Activated naive CD4-positive, alpha-beta T cell treated with anti-CD3 and anti-CD28 coated beads for 36 hours (primary cell): ENCODE measurements at regions of chr6 and their contacts with region 1.

Region 1: DNA sequence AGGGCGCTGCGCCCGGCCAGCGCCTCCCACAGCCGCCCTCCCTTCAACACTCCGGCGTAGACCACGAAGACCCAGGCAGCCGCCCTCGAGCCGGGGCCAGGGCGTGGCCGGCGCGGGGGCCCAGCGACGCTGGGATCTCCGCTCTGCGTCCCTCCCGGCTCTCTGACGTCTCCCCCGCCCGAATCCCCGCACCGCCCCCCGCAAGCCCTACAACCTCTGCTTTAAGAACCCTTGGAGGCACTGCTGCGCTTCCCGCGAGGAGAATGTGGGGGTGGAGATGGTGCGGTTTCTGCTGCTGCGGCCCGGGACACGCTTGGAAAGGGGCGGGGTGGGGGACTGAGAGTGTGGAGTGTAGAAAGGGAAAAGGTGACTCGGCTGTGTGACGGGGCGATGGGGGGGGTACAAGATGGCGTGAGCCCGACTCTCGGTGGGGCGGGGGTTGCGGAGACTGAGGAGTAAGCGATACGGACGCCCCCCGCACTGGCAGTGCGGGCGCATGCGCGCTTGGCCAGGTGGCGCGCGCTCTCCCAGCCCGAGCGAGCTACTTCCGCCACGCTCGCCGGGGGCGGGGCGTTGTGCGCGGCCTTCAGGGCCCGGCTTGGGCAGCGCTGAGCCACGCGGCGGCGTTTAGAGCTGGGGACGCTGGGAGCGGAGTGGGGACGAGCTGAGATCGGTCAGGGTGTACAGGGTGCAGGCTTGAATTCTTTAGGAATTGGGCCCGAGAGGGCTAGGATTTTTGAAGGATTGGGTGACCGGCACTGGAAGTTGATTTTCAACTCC is at the start of gene SUPT3H:
- DNase-seq: peak; percentile 91
- H3K4me3 Mint-ChIP-seq: peak within 1 kb of the TSS; percentile 92
- H3K27ac Mint-ChIP-seq: peak within 1 kb of the TSS; percentile 99
- H3K4me1 Mint-ChIP-seq: peaks cover 16% of the 10 kb centered on the region
- H3K27me3 Mint-ChIP-seq: no peaks in the 10 kb centered on the region
- total RNA-seq, gene SUPT3H: 15.7 to 17.9 TPM

Region 2: DNA sequence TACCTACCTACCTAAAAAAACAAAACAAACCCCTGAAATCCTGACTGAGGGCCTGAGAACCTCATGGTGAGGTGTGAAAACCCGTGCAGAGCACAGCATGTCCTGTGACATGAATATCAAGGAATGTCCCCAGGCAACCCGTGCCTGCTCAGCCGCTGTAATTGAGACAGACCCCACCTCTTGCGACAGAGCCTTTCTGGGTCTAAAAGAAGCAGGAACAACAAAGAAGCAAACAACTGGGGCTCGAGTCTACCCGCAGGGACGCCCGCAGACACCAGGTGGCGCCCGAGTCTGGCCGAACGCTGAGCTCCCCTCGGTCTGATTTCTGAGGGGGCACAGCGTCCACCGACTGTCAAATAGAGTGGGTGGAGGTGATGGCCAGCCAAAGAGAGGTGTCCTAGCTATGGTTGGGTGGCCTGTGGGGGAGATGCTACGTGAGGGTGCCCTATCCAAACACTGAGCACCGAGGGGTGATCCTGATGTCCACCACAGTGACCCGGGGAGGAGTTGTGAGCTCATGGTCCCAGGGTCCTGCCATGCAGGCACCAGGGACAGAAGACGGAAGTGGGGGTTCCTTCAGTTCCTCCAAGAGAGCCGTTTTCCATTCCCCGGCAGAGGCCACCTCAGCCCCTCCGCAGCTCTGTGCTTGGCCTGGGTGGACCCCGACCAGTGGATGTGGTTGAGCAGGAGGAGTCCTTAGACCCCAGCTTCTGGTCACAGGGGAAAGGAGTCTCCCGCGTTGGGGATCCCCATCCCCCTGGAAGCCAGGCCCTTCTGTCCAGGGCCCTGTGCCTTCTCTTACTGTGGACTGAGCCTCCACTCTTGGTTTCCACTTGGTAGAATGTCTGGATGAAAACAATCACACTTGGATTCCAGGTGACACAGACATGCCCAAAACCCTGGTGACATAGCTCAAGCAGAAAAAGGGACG is 722.1 kb before region 1 on chr6:
- CTCF ChIA-PET with region 1: no interaction called
- intact Hi-C with region 1: loop called (anchors 1 kb)
- DNase-seq: peak; percentile 81
- H3K4me3 Mint-ChIP-seq: peak overlapping the region; percentile 38
- H3K27ac Mint-ChIP-seq: peak overlapping the region; percentile 62
- H3K4me1 Mint-ChIP-seq: peaks cover 10% of the 10 kb centered on the region
- H3K27me3 Mint-ChIP-seq: no peaks in the 10 kb centered on the region

Region 3: GRCh38 chr6:44932651-44933091 is 445.1 kb before region 1 on chr6:
- CTCF ChIA-PET with region 1: no interaction called
- intact Hi-C with region 1: loop called (anchors 2 kb)
- DNase-seq: peak; percentile 51
- H3K4me3 Mint-ChIP-seq: peak overlapping the region; percentile 78
- H3K27ac Mint-ChIP-seq: peak overlapping the region; percentile 91
- H3K4me1 Mint-ChIP-seq: peaks cover 49% of the 10 kb centered on the region
- H3K27me3 Mint-ChIP-seq: no peaks in the 10 kb centered on the region

Region 4: DNA sequence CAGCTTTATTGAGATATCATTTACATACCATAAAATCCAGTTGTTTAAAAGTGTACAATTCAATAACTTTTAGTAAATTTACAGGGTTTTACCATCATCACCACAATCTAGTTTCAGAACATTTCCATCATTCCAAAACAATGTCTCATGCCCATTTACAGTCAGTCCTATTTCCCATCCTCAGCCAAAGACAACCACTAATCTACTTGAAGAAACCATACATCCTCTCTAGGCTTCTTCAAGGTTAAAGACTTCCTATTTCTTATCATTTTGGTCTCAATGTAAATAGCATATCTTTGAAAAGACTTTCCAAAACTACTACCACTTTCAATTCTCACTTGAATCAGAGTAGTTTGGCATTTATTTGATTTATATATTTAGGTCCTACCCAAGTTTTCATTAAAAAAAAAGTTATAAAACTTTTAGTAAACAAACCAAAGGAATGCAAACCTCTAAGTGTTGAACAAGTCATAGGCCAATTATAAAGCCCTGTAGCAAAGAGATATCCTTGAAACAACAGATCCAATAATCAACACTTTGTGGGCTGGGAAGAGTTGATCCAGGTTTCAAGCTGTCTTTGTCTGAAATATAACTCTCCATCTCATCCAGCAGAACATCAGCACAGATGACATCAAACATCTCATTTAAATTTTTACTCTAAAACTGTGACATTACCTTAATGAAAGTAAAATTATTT is 260.9 kb before region 1 on chr6:
- CTCF ChIA-PET with region 1: no interaction called
- intact Hi-C with region 1: loop called (anchors 5 kb)
- DNase-seq: no peak
- H3K4me3 Mint-ChIP-seq: no peak overlapping the region
- H3K27ac Mint-ChIP-seq: peak overlapping the region; percentile 52
- H3K4me1 Mint-ChIP-seq: peaks cover 24% of the 10 kb centered on the region
- H3K27me3 Mint-ChIP-seq: no peaks in the 10 kb centered on the region

Region 5: DNA sequence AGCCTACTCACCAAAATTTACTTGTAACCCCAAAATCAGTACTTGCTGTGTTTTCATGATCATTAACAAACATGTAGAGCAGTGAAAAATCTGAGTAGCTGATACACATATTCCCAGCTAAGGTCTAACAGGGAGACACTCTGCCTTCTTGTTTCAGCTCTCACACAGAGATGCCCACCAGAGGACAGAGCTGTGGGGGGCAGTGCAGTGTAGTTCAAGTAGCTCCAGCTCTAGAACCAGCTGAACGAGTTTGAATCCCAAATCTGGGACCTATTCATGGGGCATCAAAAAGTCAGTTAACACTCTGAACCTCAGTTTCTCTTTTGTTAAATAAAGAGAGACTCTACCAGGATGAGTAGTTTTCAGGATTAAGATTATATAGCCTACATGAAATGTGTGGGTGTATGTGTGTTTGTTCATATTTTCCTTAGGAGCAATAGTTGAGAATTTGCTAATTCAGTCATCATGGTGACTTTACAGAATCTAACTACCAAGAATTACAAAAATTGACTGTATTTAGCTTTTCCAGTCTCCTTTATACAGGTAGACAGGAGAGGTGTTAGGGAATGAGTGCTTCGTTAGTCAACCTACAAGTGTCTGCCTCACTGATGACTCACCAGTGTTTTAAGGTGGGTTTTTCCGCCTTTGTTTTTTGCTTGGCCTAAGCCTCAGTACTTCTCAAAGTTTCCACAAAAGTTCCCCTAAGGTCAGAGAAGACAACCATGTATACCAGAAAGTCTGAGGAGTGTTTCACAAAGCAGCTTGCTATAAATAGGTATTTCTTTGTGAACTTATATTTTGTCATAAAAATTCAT is 213.6 kb before region 1 on chr6:
- CTCF ChIA-PET with region 1: no interaction called
- intact Hi-C with region 1: loop called (anchors 2 kb)
- DNase-seq: peak; percentile 72
- H3K4me3 Mint-ChIP-seq: peak overlapping the region; percentile 17
- H3K27ac Mint-ChIP-seq: peak overlapping the region; percentile 93
- H3K4me1 Mint-ChIP-seq: peaks cover 63% of the 10 kb centered on the region
- H3K27me3 Mint-ChIP-seq: no peaks in the 10 kb centered on the region

Region 6: DNA sequence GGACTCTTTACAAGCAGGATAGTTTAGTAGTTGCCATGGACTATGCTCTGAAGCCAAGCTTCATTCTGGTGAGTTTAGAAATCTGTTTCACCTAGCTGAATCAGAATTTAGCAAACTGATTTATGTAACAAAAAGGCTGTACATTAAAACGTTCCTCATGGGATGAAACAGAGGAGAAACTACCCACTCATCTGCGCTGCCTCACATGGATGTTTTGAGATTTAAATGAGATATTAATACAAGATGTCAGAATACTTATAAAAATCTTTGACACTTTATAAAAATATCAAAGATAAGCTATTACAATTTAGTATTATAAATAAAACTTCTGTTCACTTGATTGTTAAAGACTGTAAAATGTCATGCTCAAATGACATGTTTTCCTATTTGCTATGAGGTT is 32.8 kb before region 1 on chr6:
- CTCF ChIA-PET with region 1: no interaction called
- intact Hi-C with region 1: no loop called
- DNase-seq: no peak
- H3K4me3 Mint-ChIP-seq: no peak overlapping the region
- H3K27ac Mint-ChIP-seq: no peak overlapping the region
- H3K4me1 Mint-ChIP-seq: no peaks in the 10 kb centered on the region
- H3K27me3 Mint-ChIP-seq: no peaks in the 10 kb centered on the region

Region 7: DNA sequence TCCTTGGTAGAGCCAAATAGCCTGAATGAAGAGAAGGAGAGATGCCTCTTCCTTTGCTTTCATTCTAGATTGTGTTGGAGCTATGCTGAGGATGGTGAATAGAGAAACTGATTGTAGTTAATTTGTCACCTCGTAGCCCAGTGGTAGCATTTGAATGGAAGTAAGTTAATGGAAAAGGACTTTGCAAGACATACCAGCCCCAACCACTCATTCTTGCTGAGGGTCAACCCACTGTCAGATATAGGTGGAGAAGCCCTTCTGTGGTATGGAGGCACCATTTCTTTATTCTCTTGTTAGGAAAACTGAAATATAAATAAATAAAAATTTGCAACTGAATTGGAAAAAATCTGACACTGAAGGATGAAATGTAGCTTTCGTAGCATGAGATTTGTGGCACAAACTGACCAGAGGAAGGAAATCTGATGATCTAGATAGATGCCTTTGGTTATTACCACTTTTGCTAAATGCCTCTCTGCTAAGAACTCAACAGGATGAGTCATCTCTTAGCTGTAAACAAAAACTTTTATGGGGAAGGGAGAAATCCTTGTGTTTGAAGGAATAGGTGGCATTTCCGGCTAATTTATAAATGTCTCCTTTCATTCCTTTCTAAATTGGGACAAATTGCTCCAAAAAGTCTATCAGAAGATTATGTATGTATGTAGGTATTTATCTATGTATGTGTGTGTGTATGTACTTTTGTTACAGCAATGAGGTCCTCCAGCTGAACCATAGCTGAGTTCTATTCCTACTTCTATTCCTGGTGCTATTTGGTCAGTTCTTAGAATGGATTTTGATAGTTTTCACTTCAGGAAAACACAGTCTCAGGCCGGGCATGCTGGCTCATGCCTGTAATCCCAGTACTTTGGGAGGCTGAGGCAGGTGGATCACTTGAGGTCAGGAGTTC is 76.5 kb after region 1 on chr6:
- CTCF ChIA-PET with region 1: no interaction called
- intact Hi-C with region 1: no loop called
- DNase-seq: no peak
- H3K4me3 Mint-ChIP-seq: no peak overlapping the region
- H3K27ac Mint-ChIP-seq: no peak overlapping the region
- H3K4me1 Mint-ChIP-seq: peaks cover 32% of the 10 kb centered on the region
- H3K27me3 Mint-ChIP-seq: no peaks in the 10 kb centered on the region

Region 8: GRCh38 chr6:45590225-45590624 is 212.5 kb after region 1 on chr6:
- CTCF ChIA-PET with region 1: no interaction called
- intact Hi-C with region 1: loop called (anchors 2 kb)
- DNase-seq: no peak
- H3K4me3 Mint-ChIP-seq: no peak overlapping the region
- H3K27ac Mint-ChIP-seq: no peak overlapping the region
- H3K4me1 Mint-ChIP-seq: peaks cover 77% of the 10 kb centered on the region
- H3K27me3 Mint-ChIP-seq: no peaks in the 10 kb centered on the region

Region 9: GRCh38 chr6:46129629-46130511 is 752.1 kb after region 1 on chr6 and contains the start of gene ENPP4:
- CTCF ChIA-PET with region 1: no interaction called
- intact Hi-C with region 1: loop called (anchors 10 kb)
- DNase-seq: peak; percentile 91
- H3K4me3 Mint-ChIP-seq: peak within 1 kb of the TSS; percentile 92
- H3K27ac Mint-ChIP-seq: peak within 1 kb of the TSS; percentile 77
- H3K4me1 Mint-ChIP-seq: peaks cover 27% of the 10 kb centered on the region
- H3K27me3 Mint-ChIP-seq: no peaks in the 10 kb centered on the region
- total RNA-seq, gene ENPP4: 7.7 to 8.0 TPM